Activated T-helper 2 cell treated with anti-CD3 and anti-CD28 coated beads, Interferon-gamma antibody, Interleukin-2, Interleukin-4, amounts not matched to agents 10 μg/mL and 5 μg/mL and 100 μg/mL, durations not matched to agents 14 hours and 24 hours and 36 hours (primary cell): ENCODE measurements at regions of chr7 and their contacts with region 1.

Region 1: GRCh38 chr7:36923943-36924436 is 199.7 kb upstream of the AOAH start:
- DNase-seq: no peak
- H3K4me3 Mint-ChIP-seq: no peak overlapping the region
- H3K27ac Mint-ChIP-seq: peak overlapping the region; percentile 39
- H3K4me1 Mint-ChIP-seq: peaks cover 13% of the 10 kb centered on the region
- H3K27me3 Mint-ChIP-seq: no peaks in the 10 kb centered on the region

Region 2: GRCh38 chr7:36871863-36872262 is 52.1 kb before region 1 on chr7:
- intact Hi-C with region 1: loop called (anchors 5 kb)
- DNase-seq: no peak
- H3K4me3 Mint-ChIP-seq: no peak overlapping the region
- H3K27ac Mint-ChIP-seq: peak overlapping the region; percentile 89
- H3K4me1 Mint-ChIP-seq: peaks cover 25% of the 10 kb centered on the region
- H3K27me3 Mint-ChIP-seq: no peaks in the 10 kb centered on the region

Region 3: DNA sequence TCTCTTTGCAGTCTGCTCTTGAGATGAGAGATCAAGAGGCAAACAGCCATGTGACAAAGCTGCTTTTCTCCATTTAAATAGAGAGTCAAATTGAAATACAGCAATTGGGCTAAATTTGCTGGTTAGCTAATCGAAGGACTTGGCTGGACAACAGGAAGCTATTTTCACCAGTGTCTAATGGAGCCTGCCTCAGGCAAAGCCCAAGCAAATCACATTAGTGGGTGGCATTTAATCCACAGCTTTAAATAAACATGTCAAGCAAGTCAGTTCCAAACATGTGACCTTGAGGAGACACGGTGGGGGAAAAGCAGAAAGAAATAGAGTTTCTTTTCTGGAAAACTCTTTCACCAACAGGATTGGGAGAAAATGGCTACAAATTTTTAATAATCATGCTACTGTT is 19.2 kb before region 1 on chr7:
- intact Hi-C with region 1: no loop called
- DNase-seq: no peak
- H3K4me3 Mint-ChIP-seq: no peak overlapping the region
- H3K27ac Mint-ChIP-seq: no peak overlapping the region
- H3K4me1 Mint-ChIP-seq: peaks cover 6% of the 10 kb centered on the region
- H3K27me3 Mint-ChIP-seq: no peaks in the 10 kb centered on the region